Right lobe of liver (tissue), 6 donors: ENCODE measurements at regions of chr6 and their contacts with region 1.

Region 1: GRCh38 chr6:29850011-29850553 is 22.5 kb downstream of the HLA-G start:
- DNase-seq: no peak
- ATAC-seq: peak in 1 of 4 donors; percentile 22
- H3K4me3 ChIP-seq: no peak overlapping the region
- H3K27ac ChIP-seq: no peak overlapping the region
- H3K4me1 ChIP-seq: no peaks in the 10 kb centered on the region
- H3K27me3 ChIP-seq: peaks cover 0 to 12% of the 10 kb centered on the region in 2 donors
- CTCF ChIP-seq: no peak
- POLR2A ChIP-seq: peak; percentile 31

Region 2: DNA sequence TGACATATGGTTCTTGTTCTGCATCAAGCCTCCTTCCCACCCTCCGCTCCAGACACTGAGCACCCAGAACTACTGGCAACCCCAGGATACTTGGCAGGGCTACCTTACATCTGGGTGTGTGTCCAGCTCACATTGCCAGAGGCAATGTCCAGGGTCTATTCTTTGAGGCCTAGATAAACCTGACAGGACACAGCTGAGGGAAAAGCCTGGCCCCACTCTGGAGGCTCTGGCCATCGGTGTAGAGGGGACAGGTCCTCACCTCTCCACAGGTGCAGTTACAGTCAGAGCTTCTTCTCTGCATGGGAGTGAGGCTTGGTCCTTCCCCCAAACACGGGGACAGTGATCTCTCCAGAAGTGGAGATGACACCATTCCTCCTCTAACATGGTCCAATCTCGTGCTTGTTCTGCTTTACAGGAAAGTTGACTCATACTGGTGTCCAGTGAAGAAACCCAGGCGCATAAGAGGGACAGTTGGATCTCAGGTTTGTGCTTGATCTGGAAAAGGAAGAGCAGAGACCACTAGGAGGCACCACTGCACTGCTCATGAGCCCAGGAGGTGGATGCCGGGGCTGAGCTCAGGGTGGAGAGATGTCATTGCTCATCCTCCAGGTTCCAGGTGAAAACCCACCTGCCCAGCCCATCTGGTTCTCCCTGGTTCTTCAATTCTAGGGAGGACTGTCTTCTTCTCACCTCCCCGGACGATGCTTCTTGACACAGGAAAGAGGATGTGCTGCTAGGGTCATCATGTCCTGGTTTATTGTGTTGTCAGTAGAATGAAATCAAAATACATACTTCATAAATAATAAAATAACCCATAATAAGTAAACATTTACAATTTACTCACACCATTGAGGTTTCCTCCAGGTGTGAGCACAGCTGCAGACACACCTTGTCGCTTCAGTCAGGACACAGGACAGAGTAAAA is 112.1 kb before region 1 on chr6:
- intact Hi-C with region 1: no loop called
- DNase-seq: peak; percentile 61 to 75 (median 74)
- ATAC-seq: peak; percentile 97 to 99 (median 98)
- H3K4me3 ChIP-seq: no peak overlapping the region
- H3K27ac ChIP-seq: no peak overlapping the region
- H3K4me1 ChIP-seq: no peaks in the 10 kb centered on the region
- H3K27me3 ChIP-seq: no peaks in the 10 kb centered on the region
- CTCF ChIP-seq: peak; percentile 72 to 83 (median 82)
- POLR2A ChIP-seq: no peak

Region 3: DNA sequence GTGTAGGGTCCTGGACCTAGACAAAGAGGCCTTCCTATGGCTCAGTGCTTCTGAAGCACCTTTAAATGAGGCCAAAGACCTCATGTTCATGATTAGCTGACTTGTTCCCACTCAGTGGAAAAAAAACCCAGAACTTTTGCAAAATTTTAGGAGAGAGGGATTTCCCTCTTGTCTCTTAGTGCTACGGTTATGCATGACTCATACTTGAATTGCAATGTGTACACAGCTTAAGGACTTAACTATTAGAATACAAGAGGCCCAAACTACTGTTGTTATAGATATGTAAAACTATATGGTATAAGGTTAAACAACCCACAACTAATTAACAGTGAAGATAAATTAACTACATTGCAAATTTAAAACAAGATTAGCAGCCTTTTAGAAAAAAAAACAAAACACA is 59.9 kb after region 1 on chr6:
- intact Hi-C with region 1: loop called in 1 of 2 experiments (anchors 5 kb)
- DNase-seq: no peak
- ATAC-seq: peak in 1 of 4 donors; percentile 61
- H3K4me3 ChIP-seq: no peak overlapping the region
- H3K27ac ChIP-seq: no peak overlapping the region
- H3K4me1 ChIP-seq: peaks cover 0 to 10% (median 3%) of the 10 kb centered on the region in 4 donors
- H3K27me3 ChIP-seq: no peaks in the 10 kb centered on the region
- CTCF ChIP-seq: no peak
- POLR2A ChIP-seq: no peak

Region 4: DNA sequence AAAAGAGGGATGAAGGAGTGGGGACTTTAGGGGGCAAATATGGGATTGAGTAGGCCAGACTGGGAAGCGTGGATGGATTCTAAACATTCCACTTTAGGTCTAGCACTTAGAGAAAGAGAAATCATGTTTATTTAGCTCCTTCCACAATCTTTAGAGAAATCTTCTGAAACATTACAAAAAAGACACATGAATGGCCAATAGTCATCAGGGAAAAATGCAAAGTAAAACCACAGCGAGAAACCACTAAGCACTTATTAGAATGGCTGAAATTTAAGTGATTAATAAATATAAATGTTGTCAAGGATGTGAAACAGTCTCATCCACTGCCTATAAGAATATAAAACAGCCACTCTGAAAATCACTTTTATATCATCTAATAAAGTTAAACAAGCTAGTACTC is 139.1 kb after region 1 on chr6:
- intact Hi-C with region 1: no loop called
- DNase-seq: no peak
- ATAC-seq: no peak
- H3K4me3 ChIP-seq: no peak overlapping the region
- H3K27ac ChIP-seq: no peak overlapping the region
- H3K4me1 ChIP-seq: no peaks in the 10 kb centered on the region
- H3K27me3 ChIP-seq: no peaks in the 10 kb centered on the region
- CTCF ChIP-seq: no peak
- POLR2A ChIP-seq: no peak

Region 5: DNA sequence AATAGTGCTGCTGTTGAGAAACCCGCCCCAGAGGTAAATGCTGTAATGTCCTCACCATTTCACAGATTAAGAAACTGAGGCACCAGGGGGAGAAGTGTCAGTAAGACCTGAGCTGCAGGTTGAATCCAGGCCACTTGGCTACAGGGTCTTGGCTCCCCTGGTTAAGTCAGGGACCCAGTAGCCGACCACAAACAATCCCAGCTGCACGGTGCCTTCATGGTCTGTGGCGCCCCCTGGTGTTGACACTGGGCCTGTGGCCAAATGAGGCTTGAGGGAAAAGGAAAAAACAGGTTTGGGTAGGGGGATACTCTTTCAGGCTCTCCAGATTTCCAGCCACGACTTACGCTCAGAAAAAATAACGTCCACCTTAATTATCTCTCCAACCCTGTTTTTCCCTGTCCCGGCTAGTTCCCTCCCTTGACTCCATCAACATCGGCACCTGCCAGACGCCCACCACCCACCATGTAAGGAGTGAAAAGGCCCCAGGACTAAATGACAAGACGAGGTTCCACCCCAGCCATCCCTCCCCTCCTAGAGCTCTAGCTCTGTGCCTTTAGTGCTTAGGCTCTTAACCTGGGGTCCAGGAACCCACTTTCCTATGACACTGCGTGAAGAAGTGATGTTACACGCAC is 163.3 kb after region 1 on chr6:
- intact Hi-C with region 1: loop called (anchors 5 kb)
- DNase-seq: no peak
- ATAC-seq: peak; percentile 64 to 80 (median 72)
- H3K4me3 ChIP-seq: no peak overlapping the region
- H3K27ac ChIP-seq: no peak overlapping the region
- H3K4me1 ChIP-seq: no peaks in the 10 kb centered on the region
- H3K27me3 ChIP-seq: no peaks in the 10 kb centered on the region
- CTCF ChIP-seq: peak; percentile 28 to 88 (median 84)
- POLR2A ChIP-seq: no peak

Region 6: GRCh38 chr6:30019819-30020218 is 169.7 kb after region 1 on chr6:
- intact Hi-C with region 1: loop called in 1 of 2 experiments (anchors 5 kb)
- DNase-seq: no peak
- ATAC-seq: no peak
- H3K4me3 ChIP-seq: no peak overlapping the region
- H3K27ac ChIP-seq: no peak overlapping the region
- H3K4me1 ChIP-seq: no peaks in the 10 kb centered on the region
- H3K27me3 ChIP-seq: no peaks in the 10 kb centered on the region
- CTCF ChIP-seq: no peak
- POLR2A ChIP-seq: no peak